ENCODE measurements at regions of chr2 and their contacts with region 1.

Region 1: DNA sequence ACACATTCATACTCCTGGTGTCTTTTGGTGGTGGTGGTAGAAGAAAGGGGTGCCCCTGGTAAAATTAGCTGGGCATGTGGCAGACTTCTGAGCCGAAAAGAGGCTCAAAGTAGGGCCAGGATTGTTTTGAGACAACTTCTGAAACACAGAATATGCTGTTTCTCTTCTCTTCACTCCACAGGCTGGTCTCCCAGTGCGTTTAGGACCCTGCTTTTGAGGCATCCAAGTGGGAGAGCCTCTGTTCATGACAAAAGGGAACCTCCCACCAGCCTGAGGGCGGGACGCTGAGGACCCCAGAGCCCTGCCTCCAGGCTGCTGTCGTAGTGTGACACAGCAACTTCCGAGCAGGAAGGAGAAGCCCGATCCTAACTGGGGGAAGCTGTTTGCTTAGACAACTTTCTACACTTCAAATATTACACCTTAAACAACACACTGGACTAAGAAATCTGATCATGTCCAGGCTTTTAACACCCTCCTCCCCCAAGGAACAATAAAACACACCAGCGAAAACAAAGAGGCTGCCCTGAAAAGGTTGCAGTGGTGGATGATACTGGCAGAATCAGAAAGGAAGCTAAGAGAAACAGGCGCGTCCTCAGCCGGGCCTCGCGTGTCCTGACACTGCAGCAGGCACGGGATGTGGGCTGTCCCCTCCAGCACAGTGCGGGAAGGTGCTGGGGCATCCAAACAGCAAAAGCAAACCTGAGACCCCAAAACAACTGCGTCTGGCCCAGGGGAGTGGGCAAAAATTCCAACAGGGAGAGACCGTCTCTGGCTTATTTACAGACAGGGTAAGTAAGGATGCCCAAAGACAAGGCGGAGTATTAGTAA is 9.3 kb downstream of the SERTAD2 start:
- DNase-seq: peak; percentile 82
- H3K4me3 ChIP-seq: peak overlapping the region; percentile 66
- H3K27ac ChIP-seq: peak overlapping the region; percentile 94
- H3K4me1 ChIP-seq: peaks cover 89% of the 10 kb centered on the region
- H3K27me3 ChIP-seq: no peaks in the 10 kb centered on the region
- CTCF ChIP-seq: no peak

Region 2: DNA sequence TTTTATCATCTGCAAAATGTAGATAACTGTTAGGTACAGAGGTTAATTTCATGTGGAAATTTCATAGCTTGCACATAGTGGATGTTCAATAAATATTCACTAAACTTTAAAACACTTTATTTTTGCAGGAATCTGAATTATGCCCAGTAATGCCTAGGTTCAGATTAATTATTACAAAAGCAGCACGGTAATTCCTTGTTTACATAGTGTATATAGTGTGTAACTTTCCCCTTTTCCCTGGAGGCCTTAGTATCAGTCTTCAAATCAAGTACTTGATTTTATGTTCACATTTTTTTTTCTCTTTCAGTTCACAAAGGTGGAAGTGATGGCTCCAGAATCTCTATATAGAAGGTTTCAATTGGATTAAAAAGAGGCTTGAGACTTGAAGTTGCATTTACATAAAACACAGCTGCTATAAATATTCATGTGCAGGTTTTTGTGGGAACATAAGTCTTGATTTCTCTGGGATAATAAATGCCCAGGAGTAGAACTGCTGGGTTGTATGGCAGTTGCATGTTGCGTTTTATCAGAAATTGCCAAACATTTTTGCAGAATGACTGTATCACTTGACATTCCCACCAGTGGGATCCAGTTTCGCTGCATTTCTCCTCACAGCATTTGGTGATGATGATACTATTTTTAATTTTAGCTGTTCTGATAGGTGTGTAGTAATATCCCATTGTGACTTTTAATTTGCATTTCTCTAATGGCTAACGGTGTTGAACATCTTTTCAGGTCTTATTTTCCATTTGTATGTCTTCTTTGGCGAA is 218.0 kb before region 1 on chr2:
- intact Hi-C with region 1: no loop called
- DNase-seq: no peak
- H3K4me3 ChIP-seq: no peak overlapping the region
- H3K27ac ChIP-seq: no peak overlapping the region
- H3K4me1 ChIP-seq: peaks cover 8% of the 10 kb centered on the region
- H3K27me3 ChIP-seq: no peaks in the 10 kb centered on the region
- CTCF ChIP-seq: no peak

Region 3: DNA sequence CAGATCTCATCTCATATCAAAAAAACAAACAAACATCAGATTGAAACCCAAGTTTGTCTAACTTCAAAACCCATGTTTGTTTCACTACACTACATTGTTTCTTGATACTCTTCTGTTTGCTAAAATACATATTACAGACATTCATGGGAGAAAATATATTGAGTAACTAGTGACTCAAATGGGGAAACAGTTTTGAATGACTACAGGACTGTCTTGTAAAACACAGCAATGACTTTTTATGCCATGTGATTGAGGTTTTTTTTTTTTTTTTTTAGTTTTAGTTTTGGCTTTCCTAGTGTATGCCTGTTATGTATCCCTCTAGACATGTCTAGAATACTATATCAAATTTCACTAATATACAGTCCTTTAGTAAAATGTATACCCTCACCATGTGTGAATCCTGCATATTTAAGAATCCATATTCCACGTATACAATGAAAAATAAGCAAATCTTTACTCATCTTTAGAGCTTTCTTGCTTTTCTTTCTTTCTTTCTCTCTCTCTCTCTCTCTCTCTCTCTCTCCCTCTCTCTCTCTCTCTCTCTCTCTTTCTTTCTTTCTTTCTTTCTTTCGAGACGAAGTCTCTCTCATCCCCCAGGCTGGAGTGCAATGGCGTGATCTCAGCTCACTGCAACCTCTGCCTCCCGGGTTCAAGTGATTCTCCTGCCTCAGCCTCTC is 55.9 kb after region 1 on chr2:
- intact Hi-C with region 1: no loop called
- DNase-seq: no peak
- H3K4me3 ChIP-seq: no peak overlapping the region
- H3K27ac ChIP-seq: no peak overlapping the region
- H3K4me1 ChIP-seq: peaks cover 5% of the 10 kb centered on the region
- H3K27me3 ChIP-seq: no peaks in the 10 kb centered on the region
- CTCF ChIP-seq: no peak

Region 4: GRCh38 chr2:64749446-64749845 is 105.1 kb after region 1 on chr2:
- intact Hi-C with region 1: loop called (anchors 5 kb)
- DNase-seq: no peak
- H3K4me3 ChIP-seq: peak overlapping the region; percentile 79
- H3K27ac ChIP-seq: peak overlapping the region; percentile 99
- H3K4me1 ChIP-seq: peaks cover 34% of the 10 kb centered on the region
- H3K27me3 ChIP-seq: no peaks in the 10 kb centered on the region
- CTCF ChIP-seq: no peak

Region 5: DNA sequence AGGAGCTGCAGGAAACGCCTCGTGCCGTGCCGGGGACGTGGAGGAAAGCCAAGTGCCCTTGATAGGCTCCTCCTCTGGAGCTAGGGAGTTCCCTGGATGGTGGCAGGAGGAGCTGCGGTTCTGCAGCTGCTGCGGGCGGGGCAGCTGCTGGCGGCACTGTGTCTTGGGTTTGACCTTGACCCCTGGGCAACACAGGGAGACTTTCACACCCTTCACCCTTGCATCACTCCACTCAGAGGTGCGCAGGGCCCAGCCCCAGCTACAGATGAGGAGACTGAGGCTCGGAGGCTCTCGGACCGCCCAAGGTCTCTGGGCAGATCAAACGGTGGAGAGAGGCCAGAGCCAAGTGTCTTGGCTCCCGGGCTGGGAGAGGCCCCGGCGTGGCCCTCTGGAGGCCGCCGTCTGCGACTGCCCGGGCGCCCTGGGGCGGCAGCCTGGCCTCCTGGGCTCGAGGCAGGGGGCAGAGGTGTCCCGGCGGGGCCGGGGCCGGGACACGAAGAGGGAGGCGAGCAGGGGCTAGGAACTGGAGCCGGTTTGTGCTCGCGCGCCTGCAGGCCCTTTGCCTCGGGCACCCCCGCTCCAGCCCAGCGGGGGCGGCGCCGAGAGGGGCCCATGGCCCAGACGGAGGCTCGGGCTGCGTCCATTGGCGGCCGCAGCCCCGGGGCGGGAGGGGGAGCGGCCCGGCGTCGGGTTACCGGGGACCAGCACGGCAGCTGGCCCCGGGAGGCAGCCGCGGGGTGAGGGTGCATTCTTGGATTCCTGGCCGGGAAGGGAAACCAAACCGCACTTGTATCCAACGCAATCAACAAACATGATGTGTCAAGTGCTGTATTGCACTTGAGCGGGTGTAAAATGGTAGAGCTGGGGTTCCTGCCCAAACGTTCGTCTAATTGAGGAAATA is 215.2 kb after region 1 on chr2:
- intact Hi-C with region 1: loop called (anchors 5 kb)
- DNase-seq: peak; percentile 91
- H3K4me3 ChIP-seq: peak overlapping the region; percentile 70
- H3K27ac ChIP-seq: peak overlapping the region; percentile 99
- H3K4me1 ChIP-seq: peaks cover 50% of the 10 kb centered on the region
- H3K27me3 ChIP-seq: no peaks in the 10 kb centered on the region
- CTCF ChIP-seq: no peak